ENCODE measurements at regions of chr6 and their contacts with region 1.

Region 1: GRCh38 chr6:35583893-35584688 is 71.4 kb upstream of the TULP1 start:
- DNase-seq: peak in 1 of 2 experiments; percentile 67
- ATAC-seq: peak; percentile 64 to 77; a peak in 5 of 6 replicates
- H3K4me3 ChIP-seq: no peak overlapping the region
- H3K27ac ChIP-seq: peak overlapping the region in 1 of 2 experiments; percentile 43; a peak in 1 of 6 replicates
- H3K4me1 ChIP-seq: no peaks in the 10 kb centered on the region
- CTCF ChIP-seq: peak; percentile 85
- EP300 ChIP-seq: no peak
- POLR2A ChIP-seq: no peak
- RAD21 ChIP-seq: peak; percentile 89 to 93

Region 2: DNA sequence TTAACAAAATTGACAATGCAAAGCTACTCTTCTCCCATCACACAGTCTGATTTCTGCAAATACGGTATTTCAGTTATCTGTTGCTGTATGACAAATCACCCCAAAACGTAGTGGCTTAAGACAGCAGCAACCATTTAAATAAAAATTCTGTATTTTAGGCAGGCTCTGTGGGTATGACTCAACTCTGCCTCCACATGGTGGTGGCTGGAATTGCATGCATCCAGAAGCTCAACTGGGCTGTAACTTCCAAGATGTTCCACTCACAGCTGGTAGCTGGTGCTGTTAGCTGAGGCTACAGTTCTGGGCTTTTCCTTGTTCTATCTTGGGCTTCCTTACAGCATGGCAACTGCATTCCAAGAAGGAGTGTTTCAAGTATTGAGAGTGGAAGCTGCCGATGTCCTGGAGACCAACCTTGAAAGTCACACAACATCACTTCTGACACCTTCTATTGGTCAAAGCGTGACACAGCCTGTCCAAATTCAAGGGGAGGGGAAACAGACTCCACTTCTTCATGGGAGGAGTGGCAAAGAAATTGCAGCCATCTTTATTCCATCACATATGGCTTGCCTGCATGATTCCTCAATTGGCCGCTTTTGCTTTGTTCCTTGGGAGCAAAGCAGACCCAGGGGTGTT is 31.7 kb before region 1 on chr6:
- CTCF ChIA-PET with region 1: interaction called, 12 read pairs
- POLR2A ChIA-PET with region 1: no interaction called
- DNase-seq: peak; percentile 8 to 51
- ATAC-seq: peak in 1 of 2 experiments; percentile 46; a peak in 2 of 6 replicates
- H3K4me3 ChIP-seq: no peak overlapping the region
- H3K27ac ChIP-seq: no peak overlapping the region
- H3K4me1 ChIP-seq: no peaks in the 10 kb centered on the region
- CTCF ChIP-seq: peak; percentile 37; the same call in 2 of the 3 replicates
- EP300 ChIP-seq: no peak
- POLR2A ChIP-seq: no peak
- RAD21 ChIP-seq: 0 out of 5 replicates have a peak, but pooled peaks of 1 of the 2 experiments have one; percentile 34

Region 3: DNA sequence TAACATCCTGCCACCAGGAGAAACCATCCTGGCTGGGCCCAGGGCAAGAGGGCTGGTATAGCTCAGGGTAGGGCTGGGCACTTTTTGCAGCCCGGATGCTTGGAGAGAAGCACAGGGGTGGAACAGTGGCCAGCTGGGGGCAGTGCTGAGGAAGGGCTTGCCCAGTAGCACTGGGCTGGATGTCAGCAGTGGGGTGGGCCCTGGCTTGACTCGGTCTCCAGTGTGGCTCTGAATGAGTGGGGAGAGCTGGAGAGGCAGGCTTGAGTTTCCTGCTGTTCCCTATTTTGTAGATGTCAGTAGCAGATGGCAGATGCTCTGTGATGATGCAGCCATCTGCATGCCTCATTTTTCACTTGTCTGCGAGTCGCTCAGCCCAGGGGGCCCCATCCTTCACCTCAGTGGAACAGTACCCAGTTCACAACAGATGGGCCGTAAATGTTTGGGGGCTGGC is 15.1 kb before region 1 on chr6:
- CTCF ChIA-PET with region 1: interaction called, 18 read pairs
- POLR2A ChIA-PET with region 1: no interaction called
- DNase-seq: peak in 1 of 2 experiments; percentile 12
- ATAC-seq: peak; percentile 76 to 88
- H3K4me3 ChIP-seq: no peak overlapping the region
- H3K27ac ChIP-seq: no peak overlapping the region
- H3K4me1 ChIP-seq: no peaks in the 10 kb centered on the region
- CTCF ChIP-seq: no peak
- EP300 ChIP-seq: no peak
- POLR2A ChIP-seq: no peak
- RAD21 ChIP-seq: peak in 1 of 2 experiments; percentile 12; a peak in 1 of 5 replicates

Region 4: GRCh38 chr6:35727935-35728682 is 144.0 kb after region 1 on chr6:
- CTCF ChIA-PET with region 1: interaction called, 18 read pairs
- POLR2A ChIA-PET with region 1: no interaction called
- DNase-seq: peak; percentile 62 to 68
- ATAC-seq: peak; percentile 26 to 53
- H3K4me3 ChIP-seq: peak overlapping the region; percentile 60
- H3K27ac ChIP-seq: peak overlapping the region; percentile 98 to 99
- H3K4me1 ChIP-seq: peaks cover 69% of the 10 kb centered on the region
- CTCF ChIP-seq: no peak
- EP300 ChIP-seq: no peak
- POLR2A ChIP-seq: no peak
- RAD21 ChIP-seq: no peak

Region 5: DNA sequence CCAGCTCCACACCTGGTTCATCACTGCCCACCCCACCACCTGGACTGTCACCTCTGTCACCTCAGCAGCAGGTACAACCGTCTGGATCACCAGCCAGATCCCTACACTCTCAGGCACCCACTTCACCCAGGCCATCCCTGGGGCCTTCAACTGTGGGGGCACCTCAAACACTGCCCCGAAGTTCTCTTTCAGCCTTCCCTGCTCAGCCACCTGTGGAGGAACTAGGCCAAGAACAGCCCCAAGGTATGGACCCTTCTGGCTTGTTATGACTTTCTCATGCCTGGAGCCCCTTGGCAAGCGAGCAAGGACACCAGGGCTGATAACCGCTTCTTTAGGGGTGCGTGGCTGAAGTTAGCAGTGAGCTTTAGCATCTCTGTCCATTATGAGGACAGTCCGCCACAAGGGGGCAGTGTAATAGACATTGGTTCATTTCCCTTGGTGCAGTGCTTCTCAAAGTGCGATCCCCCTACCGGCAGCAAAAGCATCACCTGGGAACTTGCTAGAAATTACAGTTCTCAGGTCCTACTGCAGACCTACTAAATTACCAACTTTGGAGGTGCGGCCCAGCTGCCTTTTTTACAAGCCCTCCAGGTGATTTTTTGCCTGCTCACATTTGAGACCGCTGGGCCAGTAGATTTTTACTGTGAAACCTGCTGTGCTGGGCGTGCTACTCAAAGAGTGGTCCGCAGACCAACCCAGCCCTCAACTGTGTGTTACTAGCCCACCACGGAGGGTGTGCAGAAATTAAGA is 718.3 kb after region 1 on chr6:
- CTCF ChIA-PET with region 1: no interaction called
- POLR2A ChIA-PET with region 1: no interaction called
- DNase-seq: peak; percentile 64 to 90
- ATAC-seq: peak; percentile 95 to 99
- H3K4me3 ChIP-seq: no peak overlapping the region
- H3K27ac ChIP-seq: no peak overlapping the region
- H3K4me1 ChIP-seq: 0 out of 3 replicates have a peak, but pooled peaks cover 2% of the 10 kb centered on the region
- CTCF ChIP-seq: peak; percentile 85
- EP300 ChIP-seq: no peak
- POLR2A ChIP-seq: no peak
- RAD21 ChIP-seq: peak; percentile 57 to 62

Measured in A549 (cell line).